Posterior vena cava (tissue), 2 donors: ENCODE measurements at regions of chr3 and their contacts with region 1.

Region 1: DNA sequence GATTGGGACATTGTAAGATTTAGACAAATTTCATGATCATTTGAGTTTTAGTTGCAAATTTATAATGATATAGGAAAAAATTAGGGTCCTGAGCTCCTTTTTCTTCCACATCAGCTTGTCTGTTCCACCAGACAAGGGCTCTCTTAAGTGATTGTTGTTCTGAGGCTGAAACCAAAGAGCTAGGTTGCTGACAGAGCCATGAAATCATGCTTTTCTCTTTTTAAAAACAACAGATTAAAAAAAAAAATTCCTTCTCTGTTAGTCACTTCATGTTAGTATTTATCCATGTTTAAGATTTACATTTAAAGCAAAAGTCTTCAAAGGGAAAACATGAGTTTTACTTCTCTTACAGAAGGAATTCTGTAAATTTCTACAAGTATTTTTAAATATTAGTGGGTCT is 56.8 kb downstream of the ATP2C1 start:
- DNase-seq: no peak

Region 2: GRCh38 chr3:130939753-130940152 is 10.9 kb before region 1 on chr3:
- intact Hi-C with region 1: loop called in 1 of 2 experiments (anchors 1 kb)
- DNase-seq: no peak